PC-3 (cell line): ENCODE measurements at regions of chr12 and their contacts with region 1.

Region 1: DNA sequence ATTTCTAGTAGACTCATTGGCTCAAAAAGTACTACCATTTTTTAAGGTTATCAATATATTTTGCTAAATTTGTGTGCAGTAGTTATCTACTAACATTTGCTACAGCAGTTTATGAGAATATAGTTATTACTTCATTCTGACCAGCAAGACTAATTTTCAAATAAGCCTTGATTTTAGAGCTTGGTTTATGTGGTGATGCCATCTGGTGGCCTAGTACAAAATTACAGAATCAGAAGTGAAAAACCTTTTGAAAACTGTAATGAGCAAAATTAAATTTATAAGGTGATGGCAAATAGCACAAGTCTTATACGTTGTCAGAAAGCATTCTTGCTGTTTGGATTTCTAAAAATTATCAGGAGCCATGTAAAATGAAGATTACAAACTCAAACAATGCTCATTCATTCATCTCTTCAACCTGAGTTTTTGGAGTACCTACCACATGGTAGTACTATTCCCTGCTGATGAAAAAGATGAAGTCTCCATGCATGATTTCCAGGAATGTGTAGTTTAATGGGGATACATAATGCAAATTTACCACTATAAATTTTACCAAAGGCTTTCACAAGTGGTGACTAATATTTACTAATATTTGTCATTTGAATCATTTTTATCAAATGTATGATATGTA is 51.0 kb downstream of the MAGOHB start:
- DNase-seq: peak; percentile 87
- ATAC-seq: peak; percentile 88
- H3K4me3 ChIP-seq: no peak overlapping the region
- H3K27ac ChIP-seq: peak overlapping the region; percentile 84
- H3K4me1 ChIP-seq: peaks cover 15% of the 10 kb centered on the region
- H3K27me3 ChIP-seq: no peaks in the 10 kb centered on the region
- CTCF ChIP-seq: peak; percentile 77

Region 2: GRCh38 chr12:10331642-10332239 is 230.7 kb before region 1 on chr12:
- CTCF ChIA-PET with region 1: no interaction called
- POLR2A ChIA-PET with region 1: no interaction called
- intact Hi-C with region 1: loop called (anchors 1 kb)
- DNase-seq: peak; percentile 67
- ATAC-seq: peak; percentile 81
- H3K4me3 ChIP-seq: no peak overlapping the region
- H3K27ac ChIP-seq: no peak overlapping the region
- H3K4me1 ChIP-seq: 0 out of 2 replicates have a peak, but pooled peaks cover 2% of the 10 kb centered on the region
- H3K27me3 ChIP-seq: no peaks in the 10 kb centered on the region
- CTCF ChIP-seq: peak; percentile 83

Region 3: GRCh38 chr12:10374624-10375018 is 187.8 kb before region 1 on chr12:
- CTCF ChIA-PET with region 1: no interaction called
- POLR2A ChIA-PET with region 1: no interaction called
- intact Hi-C with region 1: no loop called
- DNase-seq: no peak
- ATAC-seq: no peak
- H3K4me3 ChIP-seq: no peak overlapping the region
- H3K27ac ChIP-seq: no peak overlapping the region
- H3K4me1 ChIP-seq: peaks cover 6% of the 10 kb centered on the region; the same call in 1 of the 2 replicates
- H3K27me3 ChIP-seq: no peaks in the 10 kb centered on the region
- CTCF ChIP-seq: no peak

Region 4: GRCh38 chr12:10501031-10501430 is 61.4 kb before region 1 on chr12:
- CTCF ChIA-PET with region 1: no interaction called
- POLR2A ChIA-PET with region 1: no interaction called
- intact Hi-C with region 1: loop called (anchors 2 kb)
- DNase-seq: peak; percentile 25
- ATAC-seq: no peak
- H3K4me3 ChIP-seq: no peak overlapping the region
- H3K27ac ChIP-seq: no peak overlapping the region
- H3K4me1 ChIP-seq: no peaks in the 10 kb centered on the region
- H3K27me3 ChIP-seq: no peaks in the 10 kb centered on the region
- CTCF ChIP-seq: peak; percentile 47